ENCODE measurements at regions of chr2 and their contacts with region 1.

Region 1: GRCh38 chr2:161273038-161273760 is 35.0 kb upstream of the PSMD14 start:
- DNase-seq: no peak
- H3K4me3 Mint-ChIP-seq: no peak overlapping the region
- H3K27ac Mint-ChIP-seq: no peak overlapping the region
- H3K4me1 Mint-ChIP-seq: no peaks in the 10 kb centered on the region
- H3K27me3 Mint-ChIP-seq: no peaks in the 10 kb centered on the region

Region 2: DNA sequence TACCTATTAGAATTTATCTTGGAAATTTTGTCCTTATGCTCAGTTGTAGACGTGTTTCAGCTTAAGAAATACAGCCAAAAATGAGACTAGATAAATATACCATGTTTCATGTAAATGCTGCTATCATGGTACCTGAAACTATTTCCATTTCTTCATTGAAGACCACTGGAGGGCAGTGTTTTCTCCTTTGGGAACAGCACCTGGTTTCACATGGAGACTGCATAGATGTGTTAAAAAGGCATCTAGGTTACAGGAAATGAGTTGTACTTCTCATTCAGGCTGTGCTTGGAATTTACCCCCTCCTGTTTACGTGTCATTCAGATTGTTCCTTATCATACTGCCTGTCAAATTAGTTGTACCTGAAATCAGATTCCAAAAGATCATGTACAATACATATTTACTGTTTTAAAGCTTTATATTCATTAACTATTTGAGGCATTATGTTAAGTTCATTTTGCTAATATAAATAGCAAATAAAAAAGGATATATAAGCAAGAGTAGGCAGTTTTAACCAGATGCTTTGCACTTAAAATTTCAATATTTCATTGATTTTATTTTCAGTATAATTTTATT is 22.2 kb before region 1 on chr2:
- CTCF ChIA-PET with region 1: interaction called, 10 read pairs
- POLR2A ChIA-PET with region 1: no interaction called
- intact Hi-C with region 1: loop called (anchors 1 kb)
- DNase-seq: no peak
- H3K4me3 Mint-ChIP-seq: no peak overlapping the region
- H3K27ac Mint-ChIP-seq: no peak overlapping the region
- H3K4me1 Mint-ChIP-seq: peaks cover 20% of the 10 kb centered on the region
- H3K27me3 Mint-ChIP-seq: no peaks in the 10 kb centered on the region